ENCODE measurements at regions of chr10 and their contacts with region 1.

Region 1: DNA sequence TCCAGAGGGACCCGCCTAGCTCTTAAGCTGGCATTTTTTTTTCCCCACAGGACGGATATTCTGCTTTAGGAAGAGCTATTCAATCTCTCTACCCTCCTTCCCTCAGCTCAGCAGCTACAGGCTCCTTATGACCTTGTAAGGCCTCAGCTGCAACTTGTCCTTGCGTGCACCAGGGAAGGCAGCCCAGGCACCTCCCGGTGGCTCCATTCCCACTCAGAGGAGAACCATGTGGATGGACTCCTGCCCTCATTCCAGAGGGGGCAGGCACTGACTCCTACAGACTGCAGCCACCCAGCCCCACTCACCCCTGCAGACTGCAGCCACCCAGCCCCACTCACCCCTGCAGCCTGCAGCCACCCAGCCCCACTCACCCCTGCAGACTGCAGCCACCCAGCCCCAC is 73.7 kb downstream of the ITIH5 start:
- DNase-seq: peak in 4 of 5 donors; percentile 47 to 79 (median 54)
- H3K4me3 ChIP-seq: no peak overlapping the region
- H3K27ac ChIP-seq: no peak overlapping the region
- H3K4me1 ChIP-seq: peaks cover 8% of the 10 kb centered on the region
- H3K27me3 ChIP-seq: no peaks in the 10 kb centered on the region
- CTCF ChIP-seq: no peak
- EP300 ChIP-seq: no peak
- POLR2A ChIP-seq: no peak

Region 2: GRCh38 chr10:7541137-7542095 is 51.6 kb before region 1 on chr10:
- intact Hi-C with region 1: loop called in 1 of 4 experiments (anchors 5 kb)
- DNase-seq: peak; percentile 71 to 92 (median 75)
- H3K4me3 ChIP-seq: no peak overlapping the region
- H3K27ac ChIP-seq: peak overlapping the region in 1 of 2 donors; percentile 75
- H3K4me1 ChIP-seq: peaks cover 15% of the 10 kb centered on the region
- H3K27me3 ChIP-seq: no peaks in the 10 kb centered on the region
- CTCF ChIP-seq: no peak
- EP300 ChIP-seq: no peak
- POLR2A ChIP-seq: no peak

Region 3: GRCh38 chr10:7722927-7723529 is 130.0 kb after region 1 on chr10:
- intact Hi-C with region 1: no loop called
- DNase-seq: no peak
- H3K4me3 ChIP-seq: no peak overlapping the region
- H3K27ac ChIP-seq: no peak overlapping the region
- H3K4me1 ChIP-seq: no peaks in the 10 kb centered on the region
- H3K27me3 ChIP-seq: no peaks in the 10 kb centered on the region
- CTCF ChIP-seq: no peak
- EP300 ChIP-seq: no peak
- POLR2A ChIP-seq: no peak